Activated naive CD4-positive, alpha-beta T cell treated with anti-CD3 and anti-CD28 coated beads for 36 hours (primary cell): ENCODE measurements at regions of chr14 and their contacts with region 1.

Region 1: DNA sequence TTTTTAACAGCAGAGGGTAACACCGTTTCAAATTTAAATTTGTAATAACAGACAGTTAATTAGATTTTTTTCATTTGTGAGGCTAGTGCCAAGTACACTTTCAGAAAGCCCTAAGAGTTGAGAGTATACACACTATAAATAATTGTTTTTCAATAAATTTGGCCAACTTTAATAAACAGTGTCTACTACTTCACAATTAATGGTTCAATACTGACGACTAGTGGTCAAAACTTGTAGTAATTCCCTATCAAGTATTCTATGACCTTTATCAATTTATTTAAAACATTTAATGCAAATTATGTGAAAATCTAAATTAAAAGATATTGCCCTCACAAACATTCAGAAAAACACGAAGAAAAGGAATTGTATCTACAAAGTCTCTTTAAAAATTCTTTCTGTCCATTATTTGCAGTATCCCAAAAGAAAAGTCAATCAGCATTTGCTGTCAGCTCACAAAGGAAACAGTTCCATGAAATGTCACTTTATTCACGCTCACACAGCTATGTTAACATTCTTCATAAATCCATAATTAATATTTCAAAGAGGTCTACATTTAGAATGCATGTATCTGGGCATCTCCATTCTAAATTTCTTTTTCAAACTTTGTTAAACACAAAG is 91.2 kb downstream of the CEP128 start:
- DNase-seq: no peak
- H3K4me3 Mint-ChIP-seq: no peak overlapping the region
- H3K27ac Mint-ChIP-seq: no peak overlapping the region
- H3K4me1 Mint-ChIP-seq: no peaks in the 10 kb centered on the region
- H3K27me3 Mint-ChIP-seq: no peaks in the 10 kb centered on the region

Region 2: DNA sequence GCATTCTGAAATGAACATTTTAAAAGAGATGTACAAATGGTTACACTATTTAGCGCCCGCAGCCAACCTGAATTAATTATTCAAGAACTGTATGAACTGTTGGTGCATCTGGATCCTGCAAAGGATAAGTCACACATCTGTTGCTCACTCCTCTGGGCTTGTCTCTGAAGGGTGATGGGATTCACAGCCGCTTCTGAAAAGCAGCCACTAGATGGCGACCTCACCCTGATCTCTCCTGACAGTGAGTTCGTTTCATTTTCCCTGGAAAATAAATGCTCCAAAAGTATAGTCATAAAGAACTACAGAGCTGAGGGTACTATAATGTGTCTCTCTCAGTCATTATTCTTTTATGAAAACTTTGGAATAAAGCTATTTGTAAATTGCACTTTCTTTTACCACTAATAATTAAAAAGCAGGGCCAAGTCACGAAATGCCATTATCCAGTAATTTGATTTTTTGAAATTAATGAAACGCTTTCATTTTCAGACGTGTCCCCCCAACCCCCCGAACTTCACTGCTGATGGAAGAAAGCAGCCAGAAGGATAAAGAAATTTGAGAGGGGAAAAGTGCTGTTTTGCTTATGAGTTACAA is 1890.5 kb before region 1 on chr14:
- CTCF ChIA-PET with region 1: no interaction called
- intact Hi-C with region 1: loop called (anchors 1 kb)
- DNase-seq: peak; percentile 64
- H3K4me3 Mint-ChIP-seq: no peak overlapping the region
- H3K27ac Mint-ChIP-seq: no peak overlapping the region
- H3K4me1 Mint-ChIP-seq: peaks cover 2% of the 10 kb centered on the region
- H3K27me3 Mint-ChIP-seq: peaks cover 2% of the 10 kb centered on the region

Region 3: GRCh38 chr14:79011091-79011919 is 1839.0 kb before region 1 on chr14:
- CTCF ChIA-PET with region 1: no interaction called
- intact Hi-C with region 1: loop called (anchors 5 kb)
- DNase-seq: peak; percentile 3
- H3K4me3 Mint-ChIP-seq: no peak overlapping the region
- H3K27ac Mint-ChIP-seq: no peak overlapping the region
- H3K4me1 Mint-ChIP-seq: no peaks in the 10 kb centered on the region
- H3K27me3 Mint-ChIP-seq: peaks cover 9% of the 10 kb centered on the region

Region 4: DNA sequence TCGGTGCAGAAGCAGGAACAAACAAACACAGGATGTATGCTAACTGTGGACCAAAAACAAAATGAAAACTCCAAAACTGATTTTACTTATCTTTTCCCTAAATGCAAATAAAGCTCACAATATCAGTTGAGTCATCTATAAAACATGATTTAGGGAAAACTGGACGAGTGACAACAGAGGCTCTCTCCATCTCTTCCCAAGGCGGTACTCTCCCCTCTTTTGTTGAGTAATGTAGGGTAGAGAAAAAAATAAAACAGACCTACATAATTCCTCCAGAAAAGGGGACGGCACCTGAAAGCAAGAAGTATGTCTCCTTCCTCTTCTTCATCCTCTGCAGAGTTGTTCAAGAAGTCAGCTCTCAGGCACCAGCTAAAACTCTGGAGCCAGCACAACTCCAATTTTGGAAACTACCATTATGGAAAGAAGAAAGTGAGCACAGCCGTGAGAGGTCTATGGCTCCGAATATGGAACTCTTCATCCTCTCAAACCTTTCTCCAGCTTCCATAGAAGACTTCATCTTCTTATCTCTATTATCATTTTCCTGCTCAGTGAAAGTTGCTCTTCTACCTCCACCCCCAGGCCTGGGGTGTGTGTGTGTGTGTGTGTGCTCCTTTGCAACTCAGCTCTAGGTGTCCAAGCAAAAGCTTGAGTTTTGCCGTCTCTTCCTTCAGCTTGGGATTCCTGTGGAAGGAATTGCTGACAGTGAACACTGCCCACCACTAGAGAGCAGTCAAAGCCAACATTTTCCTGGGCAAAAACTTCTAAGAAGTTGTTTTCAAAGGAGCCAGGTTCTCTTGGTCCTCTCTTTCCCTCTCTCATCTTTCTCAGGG is 794.4 kb before region 1 on chr14:
- CTCF ChIA-PET with region 1: no interaction called
- intact Hi-C with region 1: loop called (anchors 1 kb)
- DNase-seq: peak; percentile 12
- H3K4me3 Mint-ChIP-seq: no peak overlapping the region
- H3K27ac Mint-ChIP-seq: no peak overlapping the region
- H3K4me1 Mint-ChIP-seq: no peaks in the 10 kb centered on the region
- H3K27me3 Mint-ChIP-seq: peaks cover 2% of the 10 kb centered on the region

Region 5: DNA sequence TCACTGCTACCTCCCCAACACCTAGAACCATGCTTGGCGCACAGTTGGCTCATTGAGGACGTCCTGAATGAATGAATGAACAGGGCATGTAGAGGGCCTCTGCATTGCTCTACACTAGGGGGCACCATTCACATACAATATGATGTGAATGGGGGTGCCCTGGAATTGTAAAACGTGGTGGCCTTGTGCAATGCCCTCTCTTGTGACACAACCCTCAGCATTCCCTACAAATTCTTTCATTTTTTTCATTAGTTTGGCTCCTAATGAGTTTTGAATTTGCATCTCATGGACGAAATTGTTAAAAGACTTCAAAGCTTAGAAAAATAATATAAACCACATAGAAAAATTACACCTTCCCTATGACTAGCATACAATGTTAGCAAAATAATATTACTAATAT is 636.7 kb before region 1 on chr14:
- CTCF ChIA-PET with region 1: no interaction called
- intact Hi-C with region 1: loop called (anchors 1 kb)
- DNase-seq: peak; percentile 13
- H3K4me3 Mint-ChIP-seq: no peak overlapping the region
- H3K27ac Mint-ChIP-seq: no peak overlapping the region
- H3K4me1 Mint-ChIP-seq: peaks cover 4% of the 10 kb centered on the region
- H3K27me3 Mint-ChIP-seq: peaks cover 2% of the 10 kb centered on the region

Region 6: GRCh38 chr14:80390808-80391300 is 459.5 kb before region 1 on chr14:
- CTCF ChIA-PET with region 1: no interaction called
- intact Hi-C with region 1: no loop called
- DNase-seq: no peak
- H3K4me3 Mint-ChIP-seq: no peak overlapping the region
- H3K27ac Mint-ChIP-seq: no peak overlapping the region
- H3K4me1 Mint-ChIP-seq: no peaks in the 10 kb centered on the region
- H3K27me3 Mint-ChIP-seq: no peaks in the 10 kb centered on the region

Region 7: DNA sequence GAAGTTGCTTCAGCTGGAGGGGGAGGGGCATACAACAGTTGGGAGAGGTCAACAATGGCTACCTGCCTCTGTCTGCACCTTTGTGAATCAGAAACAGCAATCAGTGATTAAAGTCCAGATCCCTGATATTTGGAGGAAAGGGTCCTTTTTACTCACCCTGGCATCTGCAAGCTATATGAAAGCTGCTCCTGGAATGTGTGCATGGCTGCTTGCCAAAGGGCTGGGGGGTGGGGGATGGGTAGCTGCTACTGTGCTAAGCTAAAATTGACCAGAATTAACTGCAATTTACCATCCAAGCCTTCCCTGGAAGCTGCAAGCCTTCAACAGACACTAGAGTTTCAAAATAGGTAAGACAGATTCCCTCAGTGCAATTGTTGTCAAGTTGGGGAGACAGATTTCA is 384.0 kb after region 1 on chr14:
- CTCF ChIA-PET with region 1: no interaction called
- intact Hi-C with region 1: no loop called
- DNase-seq: no peak
- H3K4me3 Mint-ChIP-seq: no peak overlapping the region
- H3K27ac Mint-ChIP-seq: no peak overlapping the region
- H3K4me1 Mint-ChIP-seq: peaks cover 2% of the 10 kb centered on the region
- H3K27me3 Mint-ChIP-seq: no peaks in the 10 kb centered on the region

Region 8: DNA sequence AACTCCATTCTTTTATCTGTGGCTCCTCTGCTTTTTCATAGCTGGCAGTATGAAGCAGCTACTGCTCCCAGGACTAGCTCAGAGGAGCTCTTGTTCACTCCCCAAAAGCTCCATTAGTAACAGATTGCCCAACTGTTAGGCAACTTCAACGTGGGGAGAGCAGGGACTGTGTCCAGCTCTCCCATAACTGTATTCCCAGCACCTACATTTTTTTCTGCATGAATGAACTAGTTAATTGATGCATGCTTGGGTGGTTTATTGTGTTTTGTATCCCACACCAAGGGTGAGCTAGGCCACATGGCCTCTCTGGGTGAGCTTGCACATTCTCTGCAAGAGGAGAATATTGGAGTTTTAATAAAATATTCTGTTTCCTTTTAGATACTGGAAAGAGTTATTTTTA is 534.6 kb after region 1 on chr14:
- CTCF ChIA-PET with region 1: no interaction called
- intact Hi-C with region 1: no loop called
- DNase-seq: no peak
- H3K4me3 Mint-ChIP-seq: no peak overlapping the region
- H3K27ac Mint-ChIP-seq: no peak overlapping the region
- H3K4me1 Mint-ChIP-seq: no peaks in the 10 kb centered on the region
- H3K27me3 Mint-ChIP-seq: peaks cover 4% of the 10 kb centered on the region